Dorsolateral prefrontal cortex (tissue), 120 donors: ENCODE measurements at regions of chr22 and their contacts with region 1.

Region 1: GRCh38 chr22:31345331-31346254 is 553 bp downstream of the PATZ1 start:
- DNase-seq: peak; percentile 58 to 86 (median 79)
- H3K4me3 ChIP-seq: peak overlapping the region; percentile 54 to 93 (median 79)
- H3K27ac ChIP-seq: peak overlapping the region; percentile 14 to 98 (median 94)
- H3K27me3 ChIP-seq: no peaks in the 10 kb centered on the region
- CTCF ChIP-seq: peak; percentile 25 to 95 (median 74)

Region 2: DNA sequence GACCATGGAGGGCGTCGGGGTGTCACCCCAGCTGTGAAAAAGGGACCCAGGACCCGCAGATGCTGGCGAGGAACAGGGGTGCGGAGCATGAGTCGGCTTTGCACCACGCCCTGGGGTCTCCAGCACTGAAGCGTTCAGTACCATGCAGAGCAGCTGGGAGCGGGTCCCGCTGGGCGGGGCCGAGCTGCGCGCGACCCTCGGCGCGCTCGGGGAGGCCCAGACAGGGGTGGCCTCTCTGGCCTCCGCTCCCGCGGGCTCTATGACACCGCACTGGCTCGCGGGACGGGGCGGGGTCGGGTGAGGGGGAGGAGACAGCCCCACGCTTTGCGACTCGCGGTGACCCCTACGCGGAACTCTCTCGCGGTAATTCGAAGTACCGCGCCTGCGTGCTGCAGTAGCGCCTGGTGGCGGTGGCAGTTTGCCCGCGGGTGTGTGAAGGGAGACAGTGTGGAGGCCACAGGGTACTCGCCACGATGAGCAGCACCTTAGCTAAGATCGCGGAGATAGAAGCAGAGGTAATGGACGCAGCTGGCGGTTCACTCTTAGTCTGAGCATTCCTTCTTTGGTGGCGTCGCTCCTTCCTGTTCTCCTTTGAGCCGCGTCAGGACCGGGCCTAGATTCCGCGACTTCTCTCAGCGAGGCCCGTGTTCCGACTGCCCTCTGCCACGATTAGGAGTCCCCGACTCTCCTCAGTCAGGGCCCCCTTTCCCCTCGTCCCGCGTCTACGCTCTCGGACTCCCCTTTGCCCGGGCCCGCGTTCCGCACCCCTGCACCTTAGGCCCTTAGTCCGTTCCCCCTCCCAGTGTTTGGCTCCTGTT is 53.8 kb after region 1 on chr22 and contains the start of gene DRG1:
- intact Hi-C with region 1: loop called (anchors 1 kb)
- DNase-seq: peak; percentile 96 to 99 (median 97)
- H3K4me3 ChIP-seq: peak within 1 kb of the TSS; percentile 67 to 100 (median 94)
- H3K27ac ChIP-seq: peak within 1 kb of the TSS; percentile 54 to 98 (median 90)
- H3K27me3 ChIP-seq: no peaks in the 10 kb centered on the region
- CTCF ChIP-seq: peak in 46 of 56 donors; percentile 19 to 69 (median 49)
- total RNA-seq, gene DRG1: 27.5 to 88.4 (median 56.9) TPM